MCF 10A (cell line): ENCODE measurements at regions of chr21 and their contacts with region 1.

Region 1: GRCh38 chr21:37251294-37251634 is 15.9 kb downstream of the VPS26C start:
- DNase-seq: no peak
- H3K4me3 Mint-ChIP-seq: no peak overlapping the region
- H3K27ac Mint-ChIP-seq: no peak overlapping the region
- H3K4me1 Mint-ChIP-seq: peaks cover 17% of the 10 kb centered on the region
- H3K27me3 Mint-ChIP-seq: no peaks in the 10 kb centered on the region
- CTCF ChIP-seq: no peak

Region 2: DNA sequence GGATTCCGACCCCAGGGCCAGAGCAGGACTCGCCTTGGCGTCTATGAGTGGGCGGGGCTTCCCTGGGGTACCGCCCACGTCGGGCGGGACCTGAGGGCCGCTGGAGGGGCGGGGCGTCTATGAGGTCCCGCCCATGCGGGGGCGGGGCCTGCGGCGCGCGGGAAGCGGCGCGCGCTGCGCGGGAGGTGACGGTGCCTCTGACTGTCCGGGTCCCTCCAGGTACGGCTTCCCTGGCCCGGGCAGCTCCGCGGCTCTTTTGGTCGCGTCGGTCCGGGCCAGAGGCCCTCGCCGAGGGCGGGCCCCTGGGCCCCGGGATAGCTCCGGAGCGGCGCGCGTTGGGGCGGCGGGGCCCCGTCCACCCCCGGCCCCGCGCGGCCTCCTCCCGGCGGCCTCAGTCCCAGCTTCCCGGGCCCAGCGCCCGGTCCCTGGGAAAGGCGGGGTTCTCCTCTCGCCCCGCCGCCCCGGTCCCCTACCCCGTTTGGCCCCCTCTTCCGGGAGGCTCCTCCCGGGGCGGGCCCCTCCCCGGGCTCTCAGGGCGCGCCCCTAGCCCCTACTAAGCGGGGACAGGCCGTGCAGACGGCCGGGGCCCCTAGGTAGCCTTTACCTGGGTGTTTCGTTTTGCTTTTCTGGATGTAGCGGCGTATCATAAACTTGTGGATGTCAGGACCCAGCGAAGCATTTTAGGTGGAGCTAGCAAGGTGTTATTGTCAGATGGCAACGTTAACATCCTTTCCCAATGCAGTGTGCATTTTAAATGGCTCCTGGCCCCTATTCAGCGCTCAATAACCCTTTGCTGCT is 865.8 kb before region 1 on chr21 and contains the start of gene CHAF1B:
- CTCF ChIA-PET with region 1: no interaction called
- POLR2A ChIA-PET with region 1: no interaction called
- intact Hi-C with region 1: no loop called
- DNase-seq: peak; percentile 82
- H3K4me3 Mint-ChIP-seq: peak within 1 kb of the TSS; percentile 70
- H3K27ac Mint-ChIP-seq: no peak within 1 kb of the TSS
- H3K4me1 Mint-ChIP-seq: no peaks in the 10 kb centered on the region
- H3K27me3 Mint-ChIP-seq: no peaks in the 10 kb centered on the region
- CTCF ChIP-seq: no peak
- total RNA-seq, gene CHAF1B: 6.4 and 7.7 TPM in 2 replicates

Region 3: DNA sequence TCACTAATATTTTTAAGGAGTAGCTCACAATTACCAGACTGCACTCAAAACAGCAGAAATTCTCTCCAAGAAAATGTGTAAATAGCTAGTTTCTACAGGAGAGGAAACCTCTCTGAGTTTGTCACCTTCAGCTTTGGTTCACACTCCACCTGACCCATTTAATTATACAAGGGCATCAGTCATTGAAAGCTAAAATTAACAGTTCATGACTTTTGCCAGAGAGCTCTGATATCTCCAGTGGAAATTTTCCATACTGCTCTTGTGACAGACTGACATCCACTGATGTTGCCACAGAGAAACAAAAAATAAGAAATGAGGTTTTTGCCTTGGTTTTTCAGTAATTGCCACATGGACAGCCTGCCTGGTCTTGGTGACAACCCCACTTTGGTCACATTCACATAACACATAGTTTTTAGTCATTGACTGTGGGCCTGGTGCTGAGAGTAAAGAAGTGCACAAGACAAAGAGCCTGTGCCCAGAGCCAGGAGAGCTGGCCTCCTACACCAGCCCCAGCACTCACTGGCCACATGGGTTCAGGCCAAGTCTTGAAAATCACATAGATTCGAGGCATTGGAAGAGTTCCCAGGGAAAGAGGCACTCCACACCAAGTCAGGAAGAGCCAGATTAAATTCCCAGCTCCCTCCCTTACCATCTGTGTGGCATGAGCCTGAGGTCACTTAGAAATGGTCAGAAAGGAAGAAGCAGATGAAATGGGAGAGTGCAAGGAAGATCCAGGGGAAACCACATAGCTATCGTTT is 566.1 kb before region 1 on chr21:
- CTCF ChIA-PET with region 1: no interaction called
- POLR2A ChIA-PET with region 1: no interaction called
- intact Hi-C with region 1: no loop called
- DNase-seq: no peak
- H3K4me3 Mint-ChIP-seq: no peak overlapping the region
- H3K27ac Mint-ChIP-seq: no peak overlapping the region
- H3K4me1 Mint-ChIP-seq: no peaks in the 10 kb centered on the region
- H3K27me3 Mint-ChIP-seq: peaks cover 16% of the 10 kb centered on the region
- CTCF ChIP-seq: no peak

Region 4: DNA sequence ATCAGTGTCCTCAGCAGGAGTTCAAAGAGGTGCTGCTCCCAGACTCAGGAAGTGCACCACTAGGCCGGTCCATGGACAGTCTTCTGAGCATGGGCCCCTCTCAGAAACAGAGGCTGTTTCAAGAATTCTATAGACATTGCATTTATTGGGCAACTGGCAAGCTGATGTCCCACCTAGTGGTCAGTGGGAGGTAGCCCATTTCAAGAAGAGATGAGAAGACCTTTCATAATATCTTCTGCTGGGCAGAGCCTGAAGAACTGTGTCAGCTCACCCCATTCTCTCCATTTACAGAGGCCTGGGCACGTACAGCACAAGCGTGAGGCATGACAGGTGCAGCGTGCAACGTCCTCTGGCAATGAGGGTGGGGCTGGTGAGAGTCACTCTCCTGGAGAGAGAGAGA is 331.3 kb after region 1 on chr21:
- CTCF ChIA-PET with region 1: no interaction called
- POLR2A ChIA-PET with region 1: no interaction called
- intact Hi-C with region 1: loop called (anchors 1 kb)
- DNase-seq: peak; percentile 68
- H3K4me3 Mint-ChIP-seq: no peak overlapping the region
- H3K27ac Mint-ChIP-seq: no peak overlapping the region
- H3K4me1 Mint-ChIP-seq: peaks cover 7% of the 10 kb centered on the region
- H3K27me3 Mint-ChIP-seq: no peaks in the 10 kb centered on the region
- CTCF ChIP-seq: peak; percentile 38